Vagina (tissue), 2 donors: ENCODE measurements at regions of chr13 and their contacts with region 1.

Region 1: DNA sequence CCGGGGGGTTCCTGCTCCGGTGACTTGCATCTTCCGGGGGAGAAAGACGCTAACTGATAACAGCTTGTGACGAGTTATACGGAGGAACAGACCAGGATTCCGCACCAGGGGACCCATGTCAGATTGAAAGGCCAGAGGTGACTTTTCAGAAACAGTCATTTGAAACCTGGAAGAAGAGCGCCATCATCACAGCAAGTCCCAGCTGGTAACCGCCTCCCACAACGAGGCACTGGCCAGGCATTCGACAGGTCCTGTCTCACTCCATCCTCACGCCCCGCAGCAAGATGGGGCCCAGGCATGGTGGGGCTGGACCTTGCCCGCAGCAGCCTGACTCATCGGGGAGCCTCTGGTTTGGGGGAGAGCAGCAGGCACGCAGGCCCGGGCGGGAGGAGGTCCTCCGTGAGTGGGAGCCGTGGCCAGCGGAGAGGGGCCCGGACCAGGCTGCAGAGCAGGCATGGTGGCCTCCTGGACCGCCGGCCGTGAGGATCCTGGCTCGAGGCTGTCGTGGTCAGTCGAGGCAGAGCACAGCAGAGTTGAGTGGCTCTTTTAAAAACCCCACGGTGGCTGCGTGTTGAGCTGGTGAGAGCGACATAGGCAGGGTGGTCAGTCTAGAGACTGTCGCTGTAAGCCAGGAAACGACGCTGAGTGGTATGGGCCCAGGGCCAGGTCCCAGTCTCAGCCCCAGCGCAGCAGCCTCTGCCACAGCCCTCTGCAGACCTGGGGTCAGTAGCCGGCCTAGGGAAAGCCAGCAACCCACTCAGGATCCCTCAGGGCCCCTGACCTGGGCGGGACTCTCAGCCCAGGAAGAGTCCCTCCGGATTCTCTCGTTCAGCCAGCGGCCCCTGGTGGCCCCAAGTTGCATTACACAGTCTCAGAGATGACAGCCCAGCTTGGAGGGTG is 94.9 kb upstream of the MCF2L start:
- DNase-seq: no peak
- H3K4me3 ChIP-seq: no peak overlapping the region
- H3K27ac ChIP-seq: no peak overlapping the region
- H3K4me1 ChIP-seq: no peaks in the 10 kb centered on the region
- H3K27me3 ChIP-seq: no peaks in the 10 kb centered on the region
- CTCF ChIP-seq: peak; percentile 67 to 91 (median 78)
- POLR2A ChIP-seq: no peak

Region 2: DNA sequence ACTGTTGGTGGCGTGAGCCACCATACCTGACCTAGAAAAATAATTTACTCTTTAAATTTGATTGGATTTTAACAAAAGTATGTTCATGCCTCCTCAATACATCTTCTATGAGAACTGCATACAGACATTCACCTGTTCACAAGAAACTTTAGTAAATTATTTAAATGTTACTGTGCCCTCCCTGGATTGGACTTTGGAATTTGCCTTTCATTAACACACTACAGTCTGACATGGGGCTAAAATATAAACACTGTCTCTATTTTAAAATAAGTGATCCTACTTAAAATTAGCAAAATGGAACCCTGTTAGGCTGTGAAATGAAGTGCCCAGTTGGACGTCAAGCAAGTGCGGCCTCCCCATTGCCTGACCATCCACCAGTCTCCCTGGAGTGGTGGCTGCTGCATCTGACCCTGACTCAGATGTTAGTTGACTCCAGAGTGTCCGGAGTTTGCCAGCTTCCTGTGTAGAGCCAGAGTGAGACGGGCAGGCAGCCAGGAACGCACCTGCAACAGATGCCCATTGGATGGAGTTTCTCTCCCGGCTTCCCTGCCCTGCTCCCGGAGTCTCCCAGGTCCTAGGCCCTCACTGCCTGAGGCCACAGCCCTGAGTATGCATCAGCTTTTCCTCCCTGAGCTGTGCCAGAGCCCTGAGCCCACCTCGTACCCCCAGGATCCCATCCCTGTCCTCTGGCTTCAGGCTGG is 230.2 kb before region 1 on chr13:
- intact Hi-C with region 1: loop called (anchors 5 kb)
- DNase-seq: no peak
- H3K4me3 ChIP-seq: no peak overlapping the region
- H3K27ac ChIP-seq: no peak overlapping the region
- H3K4me1 ChIP-seq: no peaks in the 10 kb centered on the region
- H3K27me3 ChIP-seq: no peaks in the 10 kb centered on the region
- CTCF ChIP-seq: no peak
- POLR2A ChIP-seq: no peak

Region 3: DNA sequence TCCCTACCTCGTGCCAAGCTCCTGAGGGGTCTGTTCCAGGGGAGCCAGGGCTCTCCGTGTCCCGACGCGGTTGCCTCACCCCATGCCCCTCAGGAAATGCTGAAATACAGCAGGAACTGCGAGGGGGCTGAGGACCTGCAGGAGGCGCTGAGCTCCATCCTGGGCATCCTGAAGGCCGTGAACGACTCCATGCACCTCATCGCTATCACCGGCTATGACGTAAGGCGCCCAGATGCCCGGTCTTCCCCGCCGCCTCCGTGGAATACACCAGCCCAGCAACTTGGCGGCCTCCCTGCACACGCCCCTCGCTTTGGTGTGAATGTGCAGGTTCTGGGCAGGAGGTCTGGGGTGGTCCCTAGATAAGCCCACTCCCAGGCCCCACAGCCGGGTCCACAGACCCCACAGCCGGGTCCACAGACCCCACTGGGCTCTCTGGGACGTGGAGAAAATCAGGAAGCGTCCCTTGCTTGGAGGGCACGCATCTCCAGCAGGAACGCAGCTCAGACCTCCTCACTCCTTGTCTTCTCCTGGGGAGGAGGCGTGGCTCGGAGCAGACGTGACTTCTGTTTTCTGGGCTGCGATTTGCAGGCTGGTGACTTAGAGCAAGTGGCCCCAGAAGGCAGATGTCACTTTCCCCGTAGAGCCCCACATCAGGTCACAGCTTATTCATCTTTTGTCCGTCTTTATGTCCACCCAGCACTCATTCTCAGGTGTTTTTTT is 212.1 kb after region 1 on chr13:
- intact Hi-C with region 1: no loop called
- DNase-seq: no peak
- H3K4me3 ChIP-seq: no peak overlapping the region
- H3K27ac ChIP-seq: no peak overlapping the region
- H3K4me1 ChIP-seq: peaks cover 4% of the 10 kb centered on the region
- H3K27me3 ChIP-seq: no peaks in the 10 kb centered on the region
- CTCF ChIP-seq: no peak
- POLR2A ChIP-seq: no peak